Right ventricle myocardium inferior (tissue), 1 donor: ENCODE measurements at regions of chr15 and their contacts with region 1.

Region 1: GRCh38 chr15:101008158-101009139 is 89.3 kb downstream of the LRRK1 start:
- DNase-seq: peak; percentile 93
- ATAC-seq: peak; percentile 84

Region 2: GRCh38 chr15:100349696-100350433 is 658.6 kb before region 1 on chr15:
- intact Hi-C with region 1: loop called (anchors 10 kb)
- DNase-seq: peak; percentile 96
- ATAC-seq: peak; percentile 97

Region 3: DNA sequence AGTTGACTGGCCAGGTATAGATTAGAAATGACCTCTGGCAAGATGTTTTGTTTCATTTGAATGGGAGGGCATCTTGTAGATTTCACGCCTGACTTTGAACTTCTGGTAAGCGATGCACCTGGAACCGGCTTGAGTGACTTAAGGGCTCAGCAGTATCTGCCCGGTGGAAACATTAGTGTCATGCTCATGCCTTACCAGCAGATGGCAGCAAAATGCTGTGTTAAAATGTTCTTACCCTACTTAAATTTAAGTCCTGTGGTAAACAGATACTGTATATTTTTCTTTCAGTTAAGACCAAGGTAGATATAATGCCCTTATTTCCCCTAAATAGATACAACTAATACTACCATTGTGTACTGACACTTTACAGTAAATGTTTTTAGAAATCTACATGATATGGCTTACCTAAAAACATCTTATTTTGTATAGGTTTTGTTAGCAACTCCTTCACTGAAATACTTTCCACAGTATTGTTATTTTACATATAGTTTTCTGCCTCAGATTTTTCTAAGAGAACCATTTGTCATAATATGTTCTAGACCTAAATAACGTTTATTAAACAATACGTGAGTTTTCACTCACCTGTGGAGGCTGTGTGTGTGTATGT is 380.6 kb before region 1 on chr15:
- intact Hi-C with region 1: loop called (anchors 2 kb)
- DNase-seq: no peak
- ATAC-seq: peak; percentile 79

Region 4: GRCh38 chr15:100671858-100672543 is 336.4 kb before region 1 on chr15:
- intact Hi-C with region 1: loop called (anchors 5 kb)
- DNase-seq: no peak
- ATAC-seq: peak; percentile 72

Region 5: GRCh38 chr15:100918034-100918689 is 90.3 kb before region 1 on chr15:
- intact Hi-C with region 1: loop called (anchors 1 kb)
- DNase-seq: peak; percentile 92
- ATAC-seq: peak; percentile 94